Caco-2 (cell line): ENCODE measurements at regions of chr13 and their contacts with region 1.

Region 1: GRCh38 chr13:23466144-23467002 is 32.9 kb upstream of the SACS start:
- DNase-seq: peak; percentile 75 to 80
- H3K4me3 ChIP-seq: peak overlapping the region; percentile 57
- H3K4me3 Mint-ChIP-seq: peak overlapping the region; percentile 71
- H3K27ac Mint-ChIP-seq: peak overlapping the region; percentile 69
- H3K4me1 ChIP-seq: peaks cover 19% of the 10 kb centered on the region
- H3K4me1 Mint-ChIP-seq: peaks cover 29% of the 10 kb centered on the region
- H3K27me3 ChIP-seq: no peaks in the 10 kb centered on the region
- H3K27me3 Mint-ChIP-seq: no peaks in the 10 kb centered on the region
- CTCF ChIP-seq: peak; percentile 45 to 51

Region 2: GRCh38 chr13:23447927-23448326 is 18.4 kb before region 1 on chr13:
- CTCF ChIA-PET with region 1: no interaction called
- POLR2A ChIA-PET with region 1: no interaction called
- intact Hi-C with region 1: no loop called
- DNase-seq: no peak
- H3K4me3 ChIP-seq: no peak overlapping the region
- H3K4me3 Mint-ChIP-seq: no peak overlapping the region
- H3K27ac Mint-ChIP-seq: no peak overlapping the region
- H3K4me1 ChIP-seq: peaks cover 3% of the 10 kb centered on the region; the same call in 1 of the 2 replicates
- H3K4me1 Mint-ChIP-seq: peaks cover 13% of the 10 kb centered on the region
- H3K27me3 ChIP-seq: no peaks in the 10 kb centered on the region
- H3K27me3 Mint-ChIP-seq: no peaks in the 10 kb centered on the region
- CTCF ChIP-seq: no peak

Region 3: GRCh38 chr13:23510979-23511735 is 44.8 kb after region 1 on chr13:
- CTCF ChIA-PET with region 1: no interaction called
- POLR2A ChIA-PET with region 1: no interaction called
- intact Hi-C with region 1: loop called (anchors 2 kb)
- DNase-seq: peak; percentile 48 to 58
- H3K4me3 ChIP-seq: no peak overlapping the region
- H3K4me3 Mint-ChIP-seq: no peak overlapping the region
- H3K27ac Mint-ChIP-seq: no peak overlapping the region
- H3K4me1 ChIP-seq: peaks cover 13% of the 10 kb centered on the region
- H3K4me1 Mint-ChIP-seq: peaks cover 7% of the 10 kb centered on the region
- H3K27me3 ChIP-seq: no peaks in the 10 kb centered on the region
- H3K27me3 Mint-ChIP-seq: no peaks in the 10 kb centered on the region
- CTCF ChIP-seq: peak; percentile 40 to 62

Region 4: DNA sequence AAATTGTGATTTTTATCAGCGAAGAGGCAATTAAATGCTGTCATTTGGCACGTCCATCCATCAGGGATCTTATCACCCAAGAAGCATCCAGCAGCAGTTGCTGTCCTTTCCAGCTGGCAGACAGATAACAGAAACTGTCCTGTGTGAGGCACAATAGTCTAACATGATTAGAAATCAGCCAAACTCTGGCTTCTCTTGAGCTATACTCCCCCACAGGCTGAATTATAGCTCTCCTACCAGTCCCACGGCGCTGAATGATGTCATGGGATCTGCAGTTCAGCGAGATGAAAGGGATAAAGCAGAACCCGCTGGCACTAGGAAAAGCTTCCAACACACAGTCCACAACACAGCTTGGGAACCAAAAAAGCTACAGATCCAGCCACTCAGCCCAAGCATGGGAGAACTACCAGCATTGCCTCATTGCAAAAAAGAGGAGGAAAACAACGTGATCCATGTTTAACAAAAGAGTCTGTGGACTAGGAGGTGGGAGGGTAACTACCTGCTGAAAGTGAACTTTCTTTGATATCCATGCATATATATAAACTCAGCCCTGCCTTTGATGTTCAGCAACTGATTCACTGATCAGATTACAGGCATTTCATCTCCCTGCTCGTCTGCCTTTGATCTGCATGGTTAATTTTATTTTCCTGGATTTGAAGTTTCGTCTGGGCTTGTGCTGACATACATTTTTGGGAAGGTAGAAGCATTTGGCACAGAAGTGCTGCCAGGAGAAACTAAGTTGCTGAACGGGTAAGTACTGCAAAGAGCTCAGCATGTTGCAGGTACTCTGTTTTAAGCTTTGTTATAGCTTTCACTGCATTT is 103.9 kb after region 1 on chr13 and contains the start of gene TNFRSF19:
- CTCF ChIA-PET with region 1: interaction called, 13 read pairs
- POLR2A ChIA-PET with region 1: no interaction called
- intact Hi-C with region 1: loop called (anchors 2 kb)
- DNase-seq: peak; percentile 79 to 88
- H3K4me3 ChIP-seq: peak within 1 kb of the TSS; percentile 32
- H3K4me3 Mint-ChIP-seq: peak within 1 kb of the TSS; percentile 88
- H3K27ac Mint-ChIP-seq: peak within 1 kb of the TSS; percentile 87
- H3K4me1 ChIP-seq: peaks cover 31% of the 10 kb centered on the region
- H3K4me1 Mint-ChIP-seq: peaks cover 14% of the 10 kb centered on the region
- H3K27me3 ChIP-seq: no peaks in the 10 kb centered on the region
- H3K27me3 Mint-ChIP-seq: no peaks in the 10 kb centered on the region
- CTCF ChIP-seq: no peak
- total RNA-seq, gene TNFRSF19: 63.4 and 66.4 TPM in 2 replicates

Region 5: DNA sequence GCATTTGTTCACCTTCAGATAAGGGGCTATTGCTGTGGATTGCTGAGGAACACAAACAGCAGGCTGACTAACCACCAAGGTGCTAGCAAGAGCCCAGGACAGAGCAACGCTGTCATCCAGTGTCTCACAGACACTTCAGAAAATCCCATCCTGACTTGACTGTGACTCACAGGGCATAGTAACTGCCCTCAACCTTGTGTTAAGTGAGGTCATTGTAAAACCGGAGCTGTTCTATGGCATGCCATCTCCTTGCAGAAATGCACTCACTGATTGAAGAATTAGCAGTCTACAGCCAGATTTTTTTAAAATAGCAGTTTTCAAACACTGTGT is 154.9 kb after region 1 on chr13:
- CTCF ChIA-PET with region 1: no interaction called
- POLR2A ChIA-PET with region 1: no interaction called
- intact Hi-C with region 1: loop called (anchors 1 kb)
- DNase-seq: peak; percentile 60 to 64
- H3K4me3 ChIP-seq: no peak overlapping the region
- H3K4me3 Mint-ChIP-seq: no peak overlapping the region
- H3K27ac Mint-ChIP-seq: peak overlapping the region; percentile 84
- H3K4me1 ChIP-seq: peaks cover 35% of the 10 kb centered on the region
- H3K4me1 Mint-ChIP-seq: peaks cover 44% of the 10 kb centered on the region
- H3K27me3 ChIP-seq: no peaks in the 10 kb centered on the region
- H3K27me3 Mint-ChIP-seq: no peaks in the 10 kb centered on the region
- CTCF ChIP-seq: no peak

Region 6: GRCh38 chr13:23673354-23673753 is 207.0 kb after region 1 on chr13:
- CTCF ChIA-PET with region 1: no interaction called
- POLR2A ChIA-PET with region 1: no interaction called
- intact Hi-C with region 1: no loop called
- DNase-seq: no peak
- H3K4me3 ChIP-seq: no peak overlapping the region
- H3K4me3 Mint-ChIP-seq: no peak overlapping the region
- H3K27ac Mint-ChIP-seq: no peak overlapping the region
- H3K4me1 ChIP-seq: 0 out of 2 replicates have a peak, but pooled peaks cover 3% of the 10 kb centered on the region
- H3K4me1 Mint-ChIP-seq: no peaks in the 10 kb centered on the region
- H3K27me3 ChIP-seq: no peaks in the 10 kb centered on the region
- H3K27me3 Mint-ChIP-seq: no peaks in the 10 kb centered on the region
- CTCF ChIP-seq: no peak

Region 7: GRCh38 chr13:23707674-23708073 is 241.3 kb after region 1 on chr13:
- CTCF ChIA-PET with region 1: interaction called, 3 read pairs
- POLR2A ChIA-PET with region 1: no interaction called
- intact Hi-C with region 1: loop called (anchors 1 kb)
- DNase-seq: peak in 1 of 2 experiments; percentile 40
- H3K4me3 ChIP-seq: no peak overlapping the region
- H3K4me3 Mint-ChIP-seq: no peak overlapping the region
- H3K27ac Mint-ChIP-seq: no peak overlapping the region
- H3K4me1 ChIP-seq: no peaks in the 10 kb centered on the region
- H3K4me1 Mint-ChIP-seq: peaks cover 11% of the 10 kb centered on the region
- H3K27me3 ChIP-seq: no peaks in the 10 kb centered on the region
- H3K27me3 Mint-ChIP-seq: no peaks in the 10 kb centered on the region
- CTCF ChIP-seq: peak in 1 of 2 experiments; percentile 17

Region 8: DNA sequence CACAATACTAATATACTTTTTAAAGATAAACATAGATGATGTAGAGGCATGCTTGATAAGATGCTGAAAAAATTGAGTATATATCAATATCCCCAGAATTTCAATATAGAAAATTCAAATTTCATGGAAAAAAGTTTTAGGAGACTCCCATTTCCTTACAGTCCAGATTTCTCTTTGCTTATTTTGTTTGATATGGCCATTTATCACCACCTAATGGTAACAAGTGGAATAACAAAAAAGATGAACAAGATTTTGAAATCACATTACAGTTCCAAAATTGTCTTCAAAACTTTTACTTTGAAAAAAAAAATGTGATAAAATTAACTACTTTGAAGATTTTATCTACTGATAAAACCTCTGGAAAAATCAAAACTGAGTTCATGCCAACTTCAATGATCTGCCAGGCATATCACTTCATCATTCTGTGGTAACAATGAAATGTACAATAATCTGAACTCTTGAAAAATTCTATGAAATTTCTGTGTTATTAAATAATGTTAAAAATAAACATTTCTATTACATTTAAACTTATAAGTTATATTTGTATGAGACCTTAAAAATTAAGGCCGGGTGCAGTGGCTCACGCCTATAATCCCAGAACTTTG is 405.3 kb after region 1 on chr13:
- CTCF ChIA-PET with region 1: interaction called, 3 read pairs
- POLR2A ChIA-PET with region 1: no interaction called
- intact Hi-C with region 1: loop called (anchors 1 kb)
- DNase-seq: no peak
- H3K4me3 ChIP-seq: no peak overlapping the region
- H3K4me3 Mint-ChIP-seq: no peak overlapping the region
- H3K27ac Mint-ChIP-seq: no peak overlapping the region
- H3K4me1 ChIP-seq: peaks cover 6% of the 10 kb centered on the region; the same call in 1 of the 2 replicates
- H3K4me1 Mint-ChIP-seq: no peaks in the 10 kb centered on the region
- H3K27me3 ChIP-seq: no peaks in the 10 kb centered on the region
- H3K27me3 Mint-ChIP-seq: no peaks in the 10 kb centered on the region
- CTCF ChIP-seq: peak; percentile 42 to 69

Region 9: GRCh38 chr13:23888658-23889614 is 422.6 kb after region 1 on chr13 and contains the start of gene MIPEP:
- CTCF ChIA-PET with region 1: interaction called, 5 read pairs
- POLR2A ChIA-PET with region 1: interaction called, 3 read pairs
- intact Hi-C with region 1: loop called (anchors 2 kb)
- DNase-seq: peak; percentile 94 to 96
- H3K4me3 ChIP-seq: peak within 1 kb of the TSS; percentile 90
- H3K4me3 Mint-ChIP-seq: peak within 1 kb of the TSS; percentile 97
- H3K27ac Mint-ChIP-seq: peak within 1 kb of the TSS; percentile 88
- H3K4me1 ChIP-seq: 0 out of 2 replicates have a peak, but pooled peaks cover 9% of the 10 kb centered on the region
- H3K4me1 Mint-ChIP-seq: peaks cover 7% of the 10 kb centered on the region
- H3K27me3 ChIP-seq: no peaks in the 10 kb centered on the region
- H3K27me3 Mint-ChIP-seq: no peaks in the 10 kb centered on the region
- CTCF ChIP-seq: peak; percentile 71 to 87
- total RNA-seq, gene MIPEP: 40.6 and 40.8 TPM in 2 replicates